Head of caudate nucleus (tissue), 42 donors: ENCODE measurements at regions of chr6 and their contacts with region 1.

Region 1: GRCh38 chr6:152982768-152983636 is at the start of gene FBXO5:
- DNase-seq: peak; percentile 92 to 99 (median 97)

Region 2: DNA sequence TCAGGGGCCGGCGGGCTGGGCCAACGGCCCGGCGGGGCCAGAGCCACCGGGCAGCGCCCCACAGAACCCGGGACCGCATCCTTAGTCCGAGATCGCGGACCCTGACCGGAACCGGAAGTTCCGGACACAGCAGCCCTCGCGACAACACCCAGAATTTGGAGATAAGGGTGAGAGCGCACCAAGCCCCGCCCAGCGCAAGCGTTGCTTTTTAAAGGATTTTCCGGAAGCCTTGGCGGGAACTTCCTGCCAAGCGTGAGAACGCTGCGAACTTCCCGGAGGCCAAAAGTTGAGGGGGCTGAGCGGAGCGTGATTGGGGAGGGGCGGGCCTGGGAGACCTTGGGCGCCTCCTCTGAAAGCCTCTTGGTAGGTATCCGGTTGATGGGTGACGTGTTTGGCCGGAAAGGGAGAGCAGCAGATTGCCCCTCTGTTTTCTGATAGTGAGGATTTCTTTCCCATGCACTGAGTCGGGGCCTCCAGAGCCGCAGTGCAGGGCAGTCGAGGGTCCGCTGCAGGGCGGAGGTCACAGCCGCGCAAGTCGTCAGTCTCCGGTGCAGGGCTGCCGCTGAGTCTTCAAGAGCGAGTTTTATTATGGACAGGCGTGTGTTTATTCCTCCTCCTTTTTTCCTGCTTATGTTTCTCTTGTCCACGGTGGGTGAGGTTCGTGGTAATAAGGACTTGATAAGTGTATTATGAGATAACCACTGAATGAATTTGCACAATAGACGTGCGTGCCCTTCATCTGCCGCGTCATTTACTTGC is 19.8 kb after region 1 on chr6 and contains the start of gene MTRF1L:
- intact Hi-C with region 1: loop called (anchors 2 kb)
- DNase-seq: peak; percentile 83 to 96 (median 92)

Region 3: DNA sequence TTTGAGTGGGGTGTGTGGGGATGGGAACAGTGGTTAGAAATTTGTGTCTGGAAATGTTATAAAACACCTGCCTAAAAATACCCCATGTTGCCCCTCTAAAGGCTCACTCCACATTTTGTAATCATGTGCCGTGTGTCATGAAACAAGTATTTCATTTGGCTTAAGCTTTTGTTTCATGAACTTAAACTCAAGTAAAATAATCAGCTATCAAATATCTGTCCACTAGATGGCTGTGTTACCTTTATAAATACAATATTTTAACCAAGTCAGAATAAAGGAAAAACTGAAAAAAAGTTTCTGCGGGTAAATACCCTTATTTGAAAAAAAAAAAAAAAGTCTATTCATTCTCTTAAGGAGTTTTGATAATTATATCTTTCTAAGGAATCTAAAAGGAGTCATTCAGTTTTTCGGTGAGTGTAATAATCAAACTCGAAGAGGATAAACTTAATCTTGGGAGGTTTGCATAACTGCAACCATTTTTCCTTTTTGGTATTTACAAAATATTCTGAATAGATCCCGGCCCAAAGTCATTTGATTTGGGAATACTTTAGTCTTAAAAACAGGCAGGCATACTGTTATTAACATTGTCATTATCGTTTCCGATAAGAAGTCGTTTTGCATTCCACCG is 49.4 kb after region 1 on chr6:
- intact Hi-C with region 1: no loop called
- DNase-seq: no peak